CD4-positive, alpha-beta T cell (primary cell): ENCODE measurements at regions of chr1 and their contacts with region 1.

Region 1: GRCh38 chr1:31548907-31549808 is 27.2 kb upstream of the TINAGL1 start:
- DNase-seq: peak; percentile 75 to 90 (median 84)
- ATAC-seq: peak; percentile 98
- H3K4me3 ChIP-seq: peak overlapping the region; percentile 22
- H3K4me3 Mint-ChIP-seq: peak overlapping the region; percentile 4
- H3K27ac ChIP-seq: no peak overlapping the region
- H3K27ac Mint-ChIP-seq: no peak overlapping the region
- H3K4me1 ChIP-seq: peaks cover 16% of the 10 kb centered on the region
- H3K4me1 Mint-ChIP-seq: peaks cover 8% of the 10 kb centered on the region
- H3K27me3 ChIP-seq: peaks cover 0 to 3% of the 10 kb centered on the region in 2 experiments
- H3K27me3 Mint-ChIP-seq: peaks cover 12% of the 10 kb centered on the region
- CTCF ChIP-seq: peak; percentile 88

Region 2: DNA sequence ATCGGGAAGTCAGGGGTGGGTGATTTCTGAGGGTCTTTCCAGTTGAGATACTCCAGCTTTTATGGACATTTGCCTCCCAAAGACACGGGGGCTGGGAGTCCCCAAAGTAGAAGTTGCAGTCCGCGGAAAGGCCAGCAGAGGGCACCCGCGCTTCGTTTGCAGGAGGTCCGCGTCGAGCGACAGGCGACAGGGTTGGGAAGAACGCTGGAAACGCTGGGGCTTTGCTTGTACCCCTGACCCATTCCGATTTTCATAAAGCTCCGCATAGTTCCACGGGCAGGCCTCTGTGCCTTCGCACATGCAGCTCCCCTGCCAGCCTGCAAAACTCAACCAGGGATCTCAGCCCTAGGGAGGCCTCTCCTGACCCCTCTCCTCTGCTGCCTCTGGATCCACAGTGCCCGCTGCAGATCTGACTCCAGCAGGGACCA is 747.4 kb before region 1 on chr1:
- CTCF ChIA-PET with region 1: no interaction called
- POLR2A ChIA-PET with region 1: no interaction called
- intact Hi-C with region 1: loop called (anchors 1 kb)
- DNase-seq: peak; percentile 61 to 88 (median 78)
- ATAC-seq: peak; percentile 83
- H3K4me3 ChIP-seq: no peak overlapping the region
- H3K4me3 Mint-ChIP-seq: no peak overlapping the region
- H3K27ac ChIP-seq: no peak overlapping the region
- H3K27ac Mint-ChIP-seq: no peak overlapping the region
- H3K4me1 ChIP-seq: peaks cover 6% of the 10 kb centered on the region
- H3K4me1 Mint-ChIP-seq: no peaks in the 10 kb centered on the region
- H3K27me3 ChIP-seq: peaks cover 14 to 21% of the 10 kb centered on the region in 2 experiments
- H3K27me3 Mint-ChIP-seq: peaks cover 41% of the 10 kb centered on the region
- CTCF ChIP-seq: peak; percentile 98

Region 3: GRCh38 chr1:31155216-31155841 is 393.8 kb before region 1 on chr1:
- CTCF ChIA-PET with region 1: no interaction called
- POLR2A ChIA-PET with region 1: no interaction called
- intact Hi-C with region 1: loop called in 1 of 2 experiments (anchors 5 kb)
- DNase-seq: peak; percentile 14 to 78 (median 32)
- ATAC-seq: peak; percentile 81
- H3K4me3 ChIP-seq: peak overlapping the region; percentile 66
- H3K4me3 Mint-ChIP-seq: peak overlapping the region; percentile 89
- H3K27ac ChIP-seq: no peak overlapping the region
- H3K27ac Mint-ChIP-seq: peak overlapping the region; percentile 40
- H3K4me1 ChIP-seq: peaks cover 14% of the 10 kb centered on the region
- H3K4me1 Mint-ChIP-seq: peaks cover 12% of the 10 kb centered on the region
- H3K27me3 ChIP-seq: no peaks in the 10 kb centered on the region
- H3K27me3 Mint-ChIP-seq: no peaks in the 10 kb centered on the region
- CTCF ChIP-seq: peak; percentile 35

Region 4: GRCh38 chr1:31166462-31166861 is 382.7 kb before region 1 on chr1:
- CTCF ChIA-PET with region 1: interaction called, 3 read pairs
- POLR2A ChIA-PET with region 1: no interaction called
- intact Hi-C with region 1: loop called (anchors 2 to 5 kb)
- DNase-seq: no peak
- ATAC-seq: no peak
- H3K4me3 ChIP-seq: no peak overlapping the region
- H3K4me3 Mint-ChIP-seq: no peak overlapping the region
- H3K27ac ChIP-seq: no peak overlapping the region
- H3K27ac Mint-ChIP-seq: no peak overlapping the region
- H3K4me1 ChIP-seq: peaks cover 10% of the 10 kb centered on the region
- H3K4me1 Mint-ChIP-seq: no peaks in the 10 kb centered on the region
- H3K27me3 ChIP-seq: no peaks in the 10 kb centered on the region
- H3K27me3 Mint-ChIP-seq: peaks cover 9% of the 10 kb centered on the region
- CTCF ChIP-seq: no peak

Region 5: DNA sequence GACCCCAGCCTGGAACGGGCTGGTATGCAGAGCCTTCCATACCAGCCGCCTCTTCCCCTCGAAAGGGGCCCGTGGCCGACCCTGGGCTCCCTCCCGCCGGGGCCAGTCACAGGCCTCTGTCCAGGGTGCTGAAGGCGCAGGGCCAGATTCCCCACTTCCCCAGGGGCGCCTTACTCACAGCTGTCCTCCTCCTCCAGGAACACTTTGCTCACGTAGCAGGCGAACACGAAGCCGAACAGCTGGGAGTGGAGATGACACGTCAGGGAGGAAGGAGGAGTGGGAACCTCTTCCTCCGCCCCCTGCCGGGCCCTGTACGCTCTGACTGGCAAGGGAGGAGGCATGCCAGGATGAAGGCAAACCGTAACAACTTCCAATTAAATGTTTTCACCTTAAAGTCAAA is 366.8 kb before region 1 on chr1:
- CTCF ChIA-PET with region 1: no interaction called
- POLR2A ChIA-PET with region 1: no interaction called
- intact Hi-C with region 1: loop called in 1 of 2 experiments (anchors 5 kb)
- DNase-seq: peak; percentile 16 to 69 (median 38)
- ATAC-seq: peak; percentile 56
- H3K4me3 ChIP-seq: no peak overlapping the region
- H3K4me3 Mint-ChIP-seq: no peak overlapping the region
- H3K27ac ChIP-seq: no peak overlapping the region
- H3K27ac Mint-ChIP-seq: no peak overlapping the region
- H3K4me1 ChIP-seq: peaks cover 12% of the 10 kb centered on the region
- H3K4me1 Mint-ChIP-seq: peaks cover 4% of the 10 kb centered on the region
- H3K27me3 ChIP-seq: peaks cover 33 to 38% of the 10 kb centered on the region in 2 experiments
- H3K27me3 Mint-ChIP-seq: peaks cover 70% of the 10 kb centered on the region
- CTCF ChIP-seq: no peak

Region 6: DNA sequence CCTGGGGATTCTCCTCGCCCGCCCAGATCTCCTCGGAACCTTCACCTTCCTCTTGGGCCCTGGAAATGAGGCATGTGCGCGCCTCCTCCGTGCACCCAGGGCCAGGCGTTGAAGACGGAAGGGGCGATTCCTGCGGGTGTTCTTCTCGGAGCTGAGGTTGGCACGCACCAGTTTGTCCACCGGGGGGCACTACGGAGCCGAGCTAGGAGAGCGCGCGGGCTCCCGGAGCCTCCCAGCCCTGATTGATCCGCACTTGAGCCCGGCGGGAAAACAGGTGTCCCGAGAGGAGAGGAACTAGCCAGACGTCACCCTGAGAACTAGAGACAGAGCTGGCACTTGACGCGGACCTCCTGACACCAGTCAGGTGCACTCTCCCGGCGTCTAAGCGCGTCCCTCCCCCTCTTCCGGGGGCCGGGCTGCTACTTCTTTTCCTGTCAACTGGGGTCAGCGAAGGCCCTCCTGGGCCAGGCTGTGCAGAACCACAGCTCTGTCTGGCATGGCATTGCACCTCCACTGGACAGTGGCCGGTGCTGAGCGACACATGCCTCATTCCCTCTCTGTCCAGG is 154.4 kb before region 1 on chr1:
- CTCF ChIA-PET with region 1: interaction called, 8 read pairs
- POLR2A ChIA-PET with region 1: interaction called, 3 read pairs
- intact Hi-C with region 1: loop called (anchors 1 kb)
- DNase-seq: peak; percentile 57 to 86 (median 70)
- ATAC-seq: peak; percentile 96
- H3K4me3 ChIP-seq: peak overlapping the region; percentile 52
- H3K4me3 Mint-ChIP-seq: peak overlapping the region; percentile 84
- H3K27ac ChIP-seq: no peak overlapping the region
- H3K27ac Mint-ChIP-seq: no peak overlapping the region
- H3K4me1 ChIP-seq: peaks cover 10% of the 10 kb centered on the region
- H3K4me1 Mint-ChIP-seq: peaks cover 8% of the 10 kb centered on the region
- H3K27me3 ChIP-seq: no peaks in the 10 kb centered on the region
- H3K27me3 Mint-ChIP-seq: peaks cover 4% of the 10 kb centered on the region
- CTCF ChIP-seq: peak; percentile 82